Breast epithelium (tissue), 4 donors: ENCODE measurements at regions of chr6 and their contacts with region 1.

Region 1: DNA sequence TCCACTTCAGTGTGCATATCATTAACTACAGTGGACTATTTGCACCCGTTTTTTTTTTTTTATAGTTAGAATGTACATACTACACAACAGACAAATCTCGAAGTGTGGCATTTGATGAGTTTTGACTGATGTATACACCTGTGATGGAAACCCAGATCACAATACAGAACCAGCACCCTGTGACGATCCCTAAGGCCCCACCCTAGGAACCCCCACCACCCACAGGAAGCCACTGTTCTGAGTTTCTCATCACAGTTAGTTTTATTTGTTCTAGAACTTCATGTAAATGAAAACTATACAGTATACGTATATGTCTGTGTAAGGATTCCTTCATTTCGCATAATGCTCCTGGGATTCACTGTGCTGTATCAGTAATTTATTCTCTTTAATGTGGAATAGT is 102.8 kb downstream of the IRF4 start:
- DNase-seq: no peak
- H3K4me3 ChIP-seq: no peak overlapping the region
- H3K27ac ChIP-seq: no peak overlapping the region
- H3K4me1 ChIP-seq: no peaks in the 10 kb centered on the region
- H3K27me3 ChIP-seq: no peaks in the 10 kb centered on the region
- CTCF ChIP-seq: no peak
- POLR2A ChIP-seq: no peak

Region 2: GRCh38 chr6:373751-374724 is 120.4 kb before region 1 on chr6:
- intact Hi-C with region 1: no loop called
- DNase-seq: no peak
- H3K4me3 ChIP-seq: no peak overlapping the region
- H3K27ac ChIP-seq: no peak overlapping the region
- H3K4me1 ChIP-seq: no peaks in the 10 kb centered on the region
- H3K27me3 ChIP-seq: peaks cover 5 to 57% of the 10 kb centered on the region in 2 donors
- CTCF ChIP-seq: no peak
- POLR2A ChIP-seq: no peak

Region 3: DNA sequence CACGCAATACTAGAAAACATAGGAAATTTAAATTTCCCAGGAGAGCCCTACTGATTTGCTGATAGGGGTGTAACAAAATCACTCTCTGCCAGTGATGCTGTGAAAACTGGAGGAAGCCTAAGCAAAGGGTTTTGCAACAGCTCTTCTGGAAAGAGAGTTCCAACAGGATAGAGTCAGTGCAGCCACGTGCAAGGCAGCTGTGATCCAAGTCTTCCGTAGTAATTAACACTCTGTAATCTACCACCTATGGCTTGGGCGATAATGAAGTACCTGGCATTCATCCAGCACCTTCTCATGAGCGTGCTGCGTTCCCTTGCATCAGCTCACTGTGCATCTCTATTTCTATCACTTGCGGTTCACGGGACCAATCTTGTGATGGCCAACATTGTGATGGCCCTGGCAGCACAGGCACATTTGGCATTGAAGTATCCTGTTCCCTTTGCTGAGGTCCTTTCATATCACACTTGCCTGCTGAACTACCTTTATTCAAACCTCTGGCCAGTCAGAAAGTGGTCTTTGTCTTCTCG is 54.7 kb before region 1 on chr6:
- intact Hi-C with region 1: loop called (anchors 2 kb)
- DNase-seq: no peak
- H3K4me3 ChIP-seq: no peak overlapping the region
- H3K27ac ChIP-seq: no peak overlapping the region
- H3K4me1 ChIP-seq: no peaks in the 10 kb centered on the region
- H3K27me3 ChIP-seq: peaks cover 0 to 6% of the 10 kb centered on the region in 2 donors
- CTCF ChIP-seq: no peak
- POLR2A ChIP-seq: no peak

Region 4: DNA sequence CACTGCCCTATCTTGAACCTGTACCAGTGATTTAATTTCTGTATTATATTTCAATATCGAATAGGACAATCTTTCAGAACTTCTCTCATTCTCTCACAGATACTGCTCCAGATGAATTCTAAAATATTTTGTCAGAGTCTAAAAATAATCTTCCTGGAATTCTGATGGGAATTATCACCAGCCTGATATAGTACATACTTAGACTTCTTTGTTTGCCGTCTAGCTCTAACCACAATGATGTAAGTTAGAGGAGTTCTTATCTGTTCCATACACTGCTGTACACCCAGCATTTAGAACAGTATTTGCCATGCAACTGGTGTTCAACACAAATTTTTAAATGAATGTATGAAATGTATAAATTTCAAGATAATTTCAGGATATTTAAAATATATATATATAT is 163.8 kb after region 1 on chr6:
- intact Hi-C with region 1: no loop called
- DNase-seq: no peak
- H3K4me3 ChIP-seq: no peak overlapping the region
- H3K27ac ChIP-seq: no peak overlapping the region
- H3K4me1 ChIP-seq: no peaks in the 10 kb centered on the region
- H3K27me3 ChIP-seq: no peaks in the 10 kb centered on the region
- CTCF ChIP-seq: no peak
- POLR2A ChIP-seq: no peak